K562 (cell line): ENCODE measurements at regions of chr17 and their contacts with region 1.

Region 1: DNA sequence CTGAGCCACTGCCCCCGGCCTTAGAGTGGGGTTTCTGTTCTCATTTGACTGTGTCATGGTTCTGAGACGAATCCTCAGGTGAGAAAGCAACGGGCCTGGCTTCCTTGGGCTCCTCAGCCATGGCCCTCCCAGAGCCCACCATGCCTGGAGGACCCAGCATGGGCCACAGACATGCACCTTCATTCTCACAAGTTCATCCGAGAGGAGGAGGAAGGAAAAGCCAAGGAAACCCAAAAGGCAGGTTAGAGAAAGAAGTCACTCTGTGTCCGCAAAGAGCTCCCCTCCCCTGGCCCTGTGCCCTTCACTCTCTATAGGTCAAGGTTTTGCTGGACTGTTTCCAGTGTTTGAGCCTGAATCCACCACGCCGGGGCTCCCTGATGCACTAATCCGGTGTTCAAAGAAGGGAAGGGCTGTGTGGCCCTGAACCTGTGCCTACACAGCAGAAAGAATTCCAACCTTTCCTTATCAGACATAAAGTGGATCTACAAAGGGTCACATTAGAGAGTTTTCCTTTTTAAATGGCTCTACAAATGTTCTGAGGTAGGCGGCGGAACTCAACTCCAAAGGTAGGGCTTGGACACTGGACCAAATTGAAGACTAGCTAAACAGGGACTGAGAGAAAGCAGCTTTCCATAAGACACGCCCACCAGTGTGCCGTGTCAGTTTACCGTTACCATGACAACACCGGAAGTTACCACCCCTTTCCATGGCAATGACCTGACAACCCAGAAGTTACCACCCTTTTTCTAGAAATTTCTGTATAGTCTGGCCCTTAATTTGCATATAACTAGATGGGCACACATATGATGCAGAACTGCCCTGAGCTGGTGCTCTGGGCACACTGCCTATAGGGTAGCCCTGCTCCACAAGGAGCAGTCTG is 15.9 kb upstream of the PECAM1 start:
- DNase-seq: peak; percentile 52 to 86 (median 64)
- ATAC-seq: peak; percentile 95
- H3K4me3 ChIP-seq: no peak overlapping the region
- H3K27ac ChIP-seq: peak overlapping the region; percentile 67
- H3K4me1 ChIP-seq: peaks cover 11% of the 10 kb centered on the region in 2 experiments
- H3K27me3 ChIP-seq: no peaks in the 10 kb centered on the region
- CTCF ChIP-seq: no peak
- EP300 ChIP-seq: no peak
- POLR2A ChIP-seq: no peak
- RAD21 ChIP-seq: no peak

Region 2: DNA sequence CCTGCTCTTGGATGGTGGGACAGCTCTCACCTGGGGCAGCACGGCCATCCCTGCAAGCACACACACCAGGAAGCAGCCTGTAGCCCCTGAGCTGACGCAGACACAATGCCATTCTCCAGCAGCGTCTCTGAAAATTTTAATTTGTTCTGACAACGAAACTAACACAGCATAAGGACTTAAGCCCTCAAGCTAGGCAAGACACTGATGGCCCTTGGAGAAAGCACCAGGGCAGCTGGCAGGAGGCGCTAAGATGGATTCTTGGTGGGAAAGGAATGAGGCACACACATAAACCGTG is 703.9 kb before region 1 on chr17:
- CTCF ChIA-PET with region 1: no interaction called
- POLR2A ChIA-PET with region 1: no interaction called
- in situ Hi-C with region 1: no loop called
- intact Hi-C with region 1: no loop called
- DNase-seq: no peak
- ATAC-seq: no peak
- H3K4me3 ChIP-seq: no peak overlapping the region
- H3K27ac ChIP-seq: no peak overlapping the region
- H3K4me1 ChIP-seq: peaks cover 0 to 38% of the 10 kb centered on the region in 2 experiments; a peak in 2 of 5 replicates
- H3K27me3 ChIP-seq: no peaks in the 10 kb centered on the region
- CTCF ChIP-seq: no peak
- EP300 ChIP-seq: no peak
- POLR2A ChIP-seq: no peak
- RAD21 ChIP-seq: no peak

Region 3: GRCh38 chr17:64236853-64237277 is 169.7 kb before region 1 on chr17:
- CTCF ChIA-PET with region 1: no interaction called
- POLR2A ChIA-PET with region 1: no interaction called
- in situ Hi-C with region 1: no loop called
- intact Hi-C with region 1: no loop called
- DNase-seq: peak in 2 of 4 experiments; percentile 45 to 49
- ATAC-seq: peak; percentile 36; the same call in 1 of the 3 replicates
- H3K4me3 ChIP-seq: no peak overlapping the region
- H3K27ac ChIP-seq: no peak overlapping the region
- H3K4me1 ChIP-seq: peaks cover 16 to 31% of the 10 kb centered on the region in 2 experiments
- H3K27me3 ChIP-seq: no peaks in the 10 kb centered on the region
- CTCF ChIP-seq: no peak
- EP300 ChIP-seq: no peak
- POLR2A ChIP-seq: no peak
- RAD21 ChIP-seq: no peak

Region 4: DNA sequence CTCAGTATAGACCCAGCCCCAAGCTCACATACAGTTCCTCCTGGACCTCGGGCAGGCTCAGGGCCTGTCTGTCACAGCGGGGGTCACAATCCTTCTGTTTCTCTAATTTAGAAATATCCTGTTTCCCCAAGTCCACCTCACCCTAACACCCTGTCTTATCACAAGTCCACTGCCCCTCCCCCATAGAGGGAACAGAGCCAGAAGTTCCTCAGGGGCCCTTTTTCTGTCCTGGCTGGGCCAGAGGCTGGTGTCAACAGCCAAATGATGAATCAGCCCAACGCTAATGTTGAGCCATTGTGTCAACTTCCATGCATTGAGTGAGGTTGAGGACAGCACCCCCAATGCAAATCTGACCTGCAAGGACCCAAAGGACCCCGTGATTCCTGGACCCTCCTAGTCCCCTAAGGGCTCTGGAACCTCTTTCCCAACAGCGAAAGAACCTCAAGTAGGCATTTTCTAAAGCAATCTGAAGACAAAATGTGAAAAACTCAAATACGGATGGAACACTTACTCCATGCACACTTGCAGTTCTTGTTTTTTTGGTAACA is 74.5 kb before region 1 on chr17:
- CTCF ChIA-PET with region 1: no interaction called
- POLR2A ChIA-PET with region 1: no interaction called
- in situ Hi-C with region 1: no loop called
- intact Hi-C with region 1: loop called (anchors 2 kb)
- DNase-seq: peak; percentile 76 to 94 (median 84)
- ATAC-seq: peak; percentile 93
- H3K4me3 ChIP-seq: no peak overlapping the region
- H3K27ac ChIP-seq: peak overlapping the region; percentile 89
- H3K4me1 ChIP-seq: peaks cover 39 to 46% of the 10 kb centered on the region in 2 experiments
- H3K27me3 ChIP-seq: no peaks in the 10 kb centered on the region
- CTCF ChIP-seq: no peak
- EP300 ChIP-seq: peak; percentile 95
- POLR2A ChIP-seq: no peak
- RAD21 ChIP-seq: peak in 1 of 2 experiments; percentile 37; a peak in 2 of 4 replicates

Region 5: GRCh38 chr17:64382061-64382583 is 24.4 kb before region 1 on chr17:
- CTCF ChIA-PET with region 1: no interaction called
- POLR2A ChIA-PET with region 1: no interaction called
- in situ Hi-C with region 1: no loop called
- intact Hi-C with region 1: no loop called
- DNase-seq: no peak
- ATAC-seq: no peak
- H3K4me3 ChIP-seq: no peak overlapping the region
- H3K27ac ChIP-seq: no peak overlapping the region
- H3K4me1 ChIP-seq: peaks cover 17 to 28% of the 10 kb centered on the region in 2 experiments
- H3K27me3 ChIP-seq: no peaks in the 10 kb centered on the region
- CTCF ChIP-seq: no peak
- EP300 ChIP-seq: no peak
- POLR2A ChIP-seq: no peak
- RAD21 ChIP-seq: no peak

Region 6: GRCh38 chr17:64441772-64442540 is 35.4 kb after region 1 on chr17:
- CTCF ChIA-PET with region 1: no interaction called
- POLR2A ChIA-PET with region 1: no interaction called
- in situ Hi-C with region 1: no loop called
- intact Hi-C with region 1: no loop called
- DNase-seq: peak in 1 of 4 experiments; percentile 38
- ATAC-seq: peak; percentile 78
- H3K4me3 ChIP-seq: no peak overlapping the region
- H3K27ac ChIP-seq: peak overlapping the region; percentile 36; the same call in 2 of the 3 replicates
- H3K4me1 ChIP-seq: peaks cover 4 to 9% of the 10 kb centered on the region in 2 experiments; a peak in 4 of 5 replicates
- H3K27me3 ChIP-seq: no peaks in the 10 kb centered on the region
- CTCF ChIP-seq: no peak
- EP300 ChIP-seq: no peak
- POLR2A ChIP-seq: no peak
- RAD21 ChIP-seq: no peak